Upper lobe of right lung (tissue), 1 donor: ENCODE measurements at regions of chr11 and their contacts with region 1.

Region 1: DNA sequence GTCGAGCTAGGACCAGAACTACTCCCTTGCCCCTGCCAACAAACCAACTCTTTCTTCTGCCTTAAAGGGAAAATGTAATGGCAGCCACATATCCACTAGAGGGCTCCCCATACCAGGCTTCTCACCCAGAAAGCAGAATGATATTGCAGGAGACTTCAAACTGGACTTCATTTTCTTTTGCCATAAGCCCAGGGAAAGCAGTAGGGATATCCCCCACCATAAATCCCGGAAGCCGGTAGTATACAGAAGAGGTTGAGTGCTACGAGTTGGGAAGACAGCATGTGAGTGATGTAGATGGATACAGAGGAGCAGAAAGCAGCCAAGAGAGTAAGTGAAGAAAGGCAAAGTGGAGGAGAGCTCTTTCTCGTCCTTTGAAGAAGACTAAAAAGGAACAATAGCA is 12.1 kb downstream of the PLAAT5 start:
- DNase-seq: no peak
- ATAC-seq: peak; percentile 99
- H3K4me3 ChIP-seq: no peak overlapping the region
- H3K27ac ChIP-seq: no peak overlapping the region
- H3K4me1 ChIP-seq: no peaks in the 10 kb centered on the region
- H3K27me3 ChIP-seq: no peaks in the 10 kb centered on the region
- CTCF ChIP-seq: peak; percentile 90

Region 2: DNA sequence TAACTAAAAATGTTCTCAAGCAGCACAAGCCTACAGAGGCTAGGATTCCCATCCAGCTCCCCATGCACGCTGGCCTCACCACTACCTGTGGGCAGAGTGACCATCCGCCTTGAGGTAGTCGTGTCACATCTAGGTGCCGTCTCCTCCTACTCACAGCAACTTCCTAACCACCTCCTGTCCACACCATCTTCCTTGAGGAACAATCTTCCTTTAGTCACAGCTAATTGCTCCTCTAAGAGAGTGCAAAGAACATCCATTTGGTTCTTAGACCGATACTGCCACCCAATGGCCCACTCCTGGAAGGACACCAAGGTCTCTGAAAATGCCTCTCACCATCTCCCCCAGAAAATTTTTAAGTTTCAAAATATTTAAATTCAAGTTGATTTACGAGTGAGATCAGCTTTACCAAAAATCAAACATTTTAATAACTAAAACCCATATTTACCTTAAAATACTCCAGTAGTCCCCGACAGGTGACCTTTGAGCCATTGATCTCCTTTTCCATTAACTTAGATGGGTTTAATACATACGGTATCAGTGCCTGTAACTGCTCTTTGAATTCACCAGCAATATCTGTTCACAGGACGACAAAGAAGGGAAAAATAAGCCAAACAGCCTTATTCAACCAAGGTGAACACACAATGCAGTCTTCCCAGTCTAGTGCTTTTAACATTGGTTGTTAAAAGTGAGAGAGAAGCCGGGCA is 157.0 kb after region 1 on chr11:
- intact Hi-C with region 1: loop called (anchors 10 kb)
- DNase-seq: no peak
- ATAC-seq: peak; percentile 93
- H3K4me3 ChIP-seq: no peak overlapping the region
- H3K27ac ChIP-seq: no peak overlapping the region
- H3K4me1 ChIP-seq: no peaks in the 10 kb centered on the region
- H3K27me3 ChIP-seq: no peaks in the 10 kb centered on the region
- CTCF ChIP-seq: peak; percentile 81